GM10248 (cell line): ENCODE measurements at regions of chr20 and their contacts with region 1.

Region 1: GRCh38 chr20:50189681-50190582 is 698 bp upstream of the CEBPB start:
- DNase-seq: peak; percentile 91
- CTCF ChIP-seq: peak; percentile 56

Region 2: GRCh38 chr20:50179507-50180016 is 10.4 kb before region 1 on chr20:
- CTCF ChIA-PET with region 1: interaction called, 12 read pairs
- POLR2A ChIA-PET with region 1: no interaction called
- DNase-seq: no peak
- CTCF ChIP-seq: no peak

Region 3: DNA sequence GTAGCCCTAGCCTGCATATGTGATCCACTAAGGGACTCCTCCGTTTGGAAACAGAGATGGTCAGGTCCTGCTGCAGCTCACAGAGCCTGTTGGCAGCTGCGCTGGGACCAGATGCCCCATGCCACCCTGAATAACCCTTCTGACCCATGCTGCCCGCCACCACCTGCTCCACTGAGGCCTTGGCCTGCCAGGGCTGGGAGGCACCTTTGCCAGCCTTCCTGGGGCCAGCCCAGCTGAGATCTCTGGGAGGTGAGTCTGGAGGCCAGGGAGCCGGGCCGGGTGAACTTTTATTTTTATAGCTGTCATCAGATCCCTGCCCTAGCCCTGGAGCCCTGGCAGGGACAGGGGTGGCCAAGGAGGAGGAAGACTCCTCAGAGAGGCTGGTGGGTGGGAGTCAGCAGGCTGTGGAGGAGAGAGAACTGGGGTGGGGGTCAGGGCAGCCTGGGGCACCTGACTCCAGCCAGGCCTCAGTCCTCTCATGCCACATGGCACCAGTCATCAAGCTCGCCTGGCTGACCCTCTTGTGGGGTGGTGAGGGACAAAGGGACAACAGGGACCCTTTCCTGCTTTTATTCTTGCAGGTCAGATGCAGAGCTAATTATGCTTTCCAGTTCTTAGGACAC is 10.7 kb after region 1 on chr20:
- CTCF ChIA-PET with region 1: interaction called, 11 read pairs
- POLR2A ChIA-PET with region 1: no interaction called
- DNase-seq: no peak
- CTCF ChIP-seq: no peak